Uterus (tissue), 4 donors: ENCODE measurements at regions of chr7 and their contacts with region 1.

Region 1: GRCh38 chr7:54781134-54781912 is 22.3 kb upstream of the SEC61G start:
- DNase-seq: no peak
- H3K4me3 ChIP-seq: no peak overlapping the region
- H3K27ac ChIP-seq: no peak overlapping the region
- H3K4me1 ChIP-seq: no peaks in the 10 kb centered on the region
- H3K27me3 ChIP-seq: no peaks in the 10 kb centered on the region
- CTCF ChIP-seq: no peak
- POLR2A ChIP-seq: no peak

Region 2: DNA sequence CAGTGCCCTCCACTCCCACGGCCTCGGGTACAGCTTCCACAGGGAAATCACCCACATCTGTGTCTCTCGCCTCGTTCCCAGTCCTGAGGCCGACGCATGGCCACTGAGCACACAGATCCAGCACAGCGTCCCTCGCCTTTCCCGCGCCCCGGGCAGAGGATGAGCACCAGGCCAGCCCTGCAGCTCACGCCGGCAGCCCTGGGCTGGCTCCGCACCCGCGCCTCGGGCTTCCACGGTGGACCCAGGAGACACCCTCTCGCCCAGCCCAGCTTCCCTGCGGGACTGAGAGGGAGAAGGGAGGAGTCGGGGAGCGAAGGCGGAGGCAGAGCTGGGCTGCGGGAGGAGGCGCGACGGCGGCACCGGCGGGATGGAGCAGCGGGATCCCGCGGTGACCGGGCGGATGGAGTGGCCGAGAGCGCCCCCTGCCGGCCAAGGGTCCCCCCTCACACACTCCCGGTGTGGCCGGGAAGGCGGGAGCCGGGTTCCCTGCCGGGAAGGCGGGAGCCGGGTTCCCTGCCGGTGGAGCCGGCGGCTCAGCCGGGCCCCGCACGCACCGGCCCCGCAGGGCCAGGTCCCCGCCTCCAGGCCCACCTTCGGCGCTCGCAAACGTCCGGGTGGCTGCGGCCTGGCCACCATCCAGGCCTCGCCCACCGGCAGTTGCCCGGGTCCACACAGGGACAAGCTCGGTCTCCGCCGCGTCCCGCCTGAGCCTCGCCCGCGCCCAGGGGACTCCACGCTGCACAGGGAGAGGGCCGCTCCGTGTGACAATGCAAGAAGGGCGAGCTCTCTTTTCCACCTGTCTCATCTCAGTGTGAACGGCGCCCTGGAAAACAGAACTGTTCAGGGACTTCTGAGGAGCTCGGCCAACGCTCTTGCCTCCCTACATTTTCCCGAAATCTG is 473.5 kb after region 1 on chr7:
- intact Hi-C with region 1: loop called (anchors 5 kb)
- DNase-seq: peak; percentile 80 to 89
- H3K4me3 ChIP-seq: peak overlapping the region; percentile 38 to 46
- H3K27ac ChIP-seq: peak overlapping the region; percentile 58 to 69
- H3K4me1 ChIP-seq: no peaks in the 10 kb centered on the region
- H3K27me3 ChIP-seq: no peaks in the 10 kb centered on the region
- CTCF ChIP-seq: peak; percentile 89 to 95 (median 92)
- POLR2A ChIP-seq: peak in 1 of 2 donors; percentile 35